Heart left ventricle (tissue), 16 donors: ENCODE measurements at regions of chr1 and their contacts with region 1.

Region 1: GRCh38 chr1:13605159-13605558 is 21.5 kb downstream of the PDPN start:
- DNase-seq: no peak
- ATAC-seq: no peak
- H3K4me3 ChIP-seq: no peak overlapping the region
- H3K27ac ChIP-seq: no peak overlapping the region
- H3K4me1 ChIP-seq: peaks cover 0 to 11% (median 0%) of the 10 kb centered on the region in 12 donors
- H3K27me3 ChIP-seq: no peaks in the 10 kb centered on the region
- CTCF ChIP-seq: no peak
- POLR2A ChIP-seq: no peak

Region 2: DNA sequence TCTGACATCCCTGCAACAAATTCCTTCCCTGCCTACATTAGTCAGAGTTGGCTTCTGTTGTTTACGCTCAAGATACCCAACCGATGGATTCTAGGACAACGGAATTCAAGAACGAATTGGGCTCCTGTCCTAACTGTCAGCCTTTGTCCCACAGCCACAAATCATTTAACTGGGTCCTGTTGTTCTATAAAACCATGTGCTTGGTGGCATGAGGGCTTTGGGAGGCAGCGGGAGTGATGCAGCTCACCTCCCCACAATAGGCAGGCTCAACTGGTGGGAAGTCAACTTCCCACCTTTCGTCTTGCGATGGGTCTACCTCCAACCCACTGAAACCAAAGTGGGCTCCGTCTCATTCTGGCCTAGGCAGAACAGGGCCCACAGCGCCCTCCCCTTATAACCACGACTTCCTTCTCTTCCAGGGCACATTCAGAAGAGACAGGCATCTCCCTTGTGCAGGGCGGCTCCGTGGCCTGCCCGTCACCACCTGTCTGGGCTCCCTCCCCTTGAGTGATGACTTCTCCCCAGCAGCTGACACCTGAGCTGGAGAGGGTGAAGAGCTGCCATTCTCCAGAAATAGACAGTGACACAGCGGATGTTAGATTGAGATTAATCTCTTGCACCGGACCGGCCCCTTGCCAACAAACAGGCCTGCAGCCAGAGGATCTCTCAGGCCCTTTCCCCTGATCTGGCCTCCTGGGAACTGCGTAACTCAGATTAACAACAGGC is 117.9 kb before region 1 on chr1:
- intact Hi-C with region 1: loop called in 1 of 10 experiments (anchors 10 kb)
- DNase-seq: peak; percentile 59 to 85 (median 76)
- ATAC-seq: peak; percentile 78 to 95 (median 88)
- H3K4me3 ChIP-seq: no peak overlapping the region
- H3K27ac ChIP-seq: peak overlapping the region in 6 of 12 donors; percentile 20 to 69 (median 50)
- H3K4me1 ChIP-seq: peaks cover 0 to 6% (median 0%) of the 10 kb centered on the region in 12 donors
- H3K27me3 ChIP-seq: no peaks in the 10 kb centered on the region
- CTCF ChIP-seq: no peak
- POLR2A ChIP-seq: no peak